Activated naive CD4-positive, alpha-beta T cell treated with anti-CD3 and anti-CD28 coated beads for 36 hours (primary cell): ENCODE measurements at regions of chr6 and their contacts with region 1.

Region 1: DNA sequence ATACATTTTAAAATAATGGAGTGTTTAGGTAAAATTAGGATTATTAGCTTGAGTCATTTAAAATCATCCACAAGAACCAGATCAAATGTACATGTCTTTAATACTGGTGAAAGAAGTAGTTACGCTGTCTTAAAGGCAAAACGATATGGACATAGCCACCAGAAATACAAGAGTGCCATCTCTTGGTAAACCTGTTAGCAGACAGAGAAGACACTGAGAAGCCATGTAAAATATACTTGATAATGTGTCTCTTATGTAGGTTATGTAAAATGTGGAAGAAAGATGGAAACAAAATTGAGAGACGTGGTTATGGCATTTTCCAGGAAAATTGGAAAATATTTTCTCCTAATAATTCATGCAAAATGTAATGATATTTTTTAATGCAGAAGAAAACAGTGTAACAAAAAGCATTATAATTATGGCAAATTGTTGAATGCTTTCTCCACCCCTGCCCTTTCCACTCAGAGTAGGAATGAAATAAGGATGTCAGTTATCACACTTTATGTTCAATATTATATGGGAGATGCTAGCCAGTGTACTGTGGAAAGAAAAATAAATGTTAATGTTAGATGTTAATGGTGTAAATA is 12.2 kb upstream of the SLC17A2 start:
- DNase-seq: peak; percentile 12
- H3K4me3 Mint-ChIP-seq: no peak overlapping the region
- H3K27ac Mint-ChIP-seq: no peak overlapping the region
- H3K4me1 Mint-ChIP-seq: peaks cover 18% of the 10 kb centered on the region
- H3K27me3 Mint-ChIP-seq: no peaks in the 10 kb centered on the region

Region 2: GRCh38 chr6:25278914-25279747 is 663.5 kb before region 1 on chr6 and contains the start of gene CARMIL1:
- CTCF ChIA-PET with region 1: no interaction called
- intact Hi-C with region 1: loop called (anchors 10 kb)
- DNase-seq: peak; percentile 76
- H3K4me3 Mint-ChIP-seq: peak within 1 kb of the TSS; percentile 83
- H3K27ac Mint-ChIP-seq: peak within 1 kb of the TSS; percentile 60
- H3K4me1 Mint-ChIP-seq: peaks cover 29% of the 10 kb centered on the region
- H3K27me3 Mint-ChIP-seq: no peaks in the 10 kb centered on the region
- total RNA-seq, gene CARMIL1: 3.9 to 4.0 TPM

Region 3: DNA sequence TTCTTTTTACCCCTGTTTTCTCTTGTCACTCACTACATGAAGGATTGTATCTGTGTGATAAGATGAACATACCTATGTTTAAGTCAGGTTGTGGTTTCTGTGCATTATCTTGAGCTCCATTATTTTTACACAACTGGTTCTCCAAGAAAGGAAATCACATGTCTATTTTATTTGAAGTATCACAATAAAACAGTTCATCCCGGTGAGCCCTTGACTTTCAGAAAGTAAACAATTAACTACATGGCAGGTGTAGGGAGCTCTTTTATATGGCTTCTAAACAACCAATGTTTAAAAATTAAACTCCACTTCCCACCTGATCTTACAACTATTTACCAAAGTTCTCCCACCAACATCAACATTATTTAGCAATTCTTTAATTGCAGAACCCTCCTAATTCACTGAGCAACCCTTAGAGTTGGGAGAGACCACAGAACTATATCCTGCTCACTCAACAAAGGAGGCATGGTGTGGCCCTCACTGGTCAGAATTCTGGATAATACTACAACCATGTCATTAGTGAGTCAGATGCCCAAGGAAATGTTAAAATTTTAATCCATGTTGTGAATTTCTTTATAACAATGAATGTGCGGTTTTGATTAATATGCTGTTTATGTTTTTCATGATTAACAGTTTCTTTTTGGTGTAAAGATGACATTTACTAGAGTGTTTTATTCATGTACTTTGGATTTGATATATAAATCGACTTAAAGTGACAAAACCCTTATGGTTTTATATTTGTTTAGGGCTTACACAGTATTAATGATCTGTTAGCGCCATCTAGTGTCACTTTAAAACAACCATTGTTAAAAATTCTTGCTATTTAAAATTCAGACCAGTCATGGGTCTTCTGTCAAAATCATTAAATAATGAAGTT is 340.6 kb before region 1 on chr6:
- CTCF ChIA-PET with region 1: no interaction called
- intact Hi-C with region 1: loop called (anchors 10 kb)
- DNase-seq: no peak
- H3K4me3 Mint-ChIP-seq: no peak overlapping the region
- H3K27ac Mint-ChIP-seq: no peak overlapping the region
- H3K4me1 Mint-ChIP-seq: peaks cover 6% of the 10 kb centered on the region
- H3K27me3 Mint-ChIP-seq: no peaks in the 10 kb centered on the region

Region 4: GRCh38 chr6:25717866-25718740 is 224.6 kb before region 1 on chr6:
- CTCF ChIA-PET with region 1: interaction called, 6 read pairs
- intact Hi-C with region 1: loop called (anchors 1 kb)
- DNase-seq: no peak
- H3K4me3 Mint-ChIP-seq: no peak overlapping the region
- H3K27ac Mint-ChIP-seq: no peak overlapping the region
- H3K4me1 Mint-ChIP-seq: no peaks in the 10 kb centered on the region
- H3K27me3 Mint-ChIP-seq: peaks cover 9% of the 10 kb centered on the region

Region 5: DNA sequence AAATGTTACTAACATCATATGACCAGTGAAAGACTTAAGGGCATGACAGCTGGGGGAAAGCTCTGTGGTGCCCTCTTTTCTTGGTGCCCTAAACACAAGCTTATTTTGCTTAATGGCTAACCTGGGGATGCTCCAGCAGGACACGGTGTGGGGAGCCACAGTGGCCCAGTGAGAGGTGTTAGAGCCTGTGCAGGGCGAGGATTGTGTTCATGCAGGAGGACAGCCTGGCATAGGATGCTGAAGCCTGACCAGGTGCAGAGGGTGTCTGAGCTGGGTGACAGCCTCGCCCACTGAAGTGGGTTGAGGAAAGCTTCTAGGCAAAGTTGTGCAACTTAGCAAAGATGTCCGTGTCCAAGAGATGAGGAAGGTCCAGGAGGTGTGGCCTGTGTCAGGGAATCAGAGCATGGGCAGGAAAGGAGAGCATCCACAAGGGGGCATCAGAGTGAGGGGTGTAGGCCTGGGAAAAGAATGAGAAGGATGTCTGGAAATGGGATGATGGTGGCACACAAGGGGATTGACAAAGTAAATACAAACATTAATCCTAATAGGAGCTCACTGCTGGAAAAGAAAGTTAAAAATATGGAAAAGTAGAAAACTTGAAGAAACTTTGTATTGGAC is 154.2 kb before region 1 on chr6:
- CTCF ChIA-PET with region 1: interaction called, 8 read pairs
- intact Hi-C with region 1: loop called (anchors 1 kb)
- DNase-seq: peak; percentile 73
- H3K4me3 Mint-ChIP-seq: no peak overlapping the region
- H3K27ac Mint-ChIP-seq: no peak overlapping the region
- H3K4me1 Mint-ChIP-seq: no peaks in the 10 kb centered on the region
- H3K27me3 Mint-ChIP-seq: no peaks in the 10 kb centered on the region

Region 6: DNA sequence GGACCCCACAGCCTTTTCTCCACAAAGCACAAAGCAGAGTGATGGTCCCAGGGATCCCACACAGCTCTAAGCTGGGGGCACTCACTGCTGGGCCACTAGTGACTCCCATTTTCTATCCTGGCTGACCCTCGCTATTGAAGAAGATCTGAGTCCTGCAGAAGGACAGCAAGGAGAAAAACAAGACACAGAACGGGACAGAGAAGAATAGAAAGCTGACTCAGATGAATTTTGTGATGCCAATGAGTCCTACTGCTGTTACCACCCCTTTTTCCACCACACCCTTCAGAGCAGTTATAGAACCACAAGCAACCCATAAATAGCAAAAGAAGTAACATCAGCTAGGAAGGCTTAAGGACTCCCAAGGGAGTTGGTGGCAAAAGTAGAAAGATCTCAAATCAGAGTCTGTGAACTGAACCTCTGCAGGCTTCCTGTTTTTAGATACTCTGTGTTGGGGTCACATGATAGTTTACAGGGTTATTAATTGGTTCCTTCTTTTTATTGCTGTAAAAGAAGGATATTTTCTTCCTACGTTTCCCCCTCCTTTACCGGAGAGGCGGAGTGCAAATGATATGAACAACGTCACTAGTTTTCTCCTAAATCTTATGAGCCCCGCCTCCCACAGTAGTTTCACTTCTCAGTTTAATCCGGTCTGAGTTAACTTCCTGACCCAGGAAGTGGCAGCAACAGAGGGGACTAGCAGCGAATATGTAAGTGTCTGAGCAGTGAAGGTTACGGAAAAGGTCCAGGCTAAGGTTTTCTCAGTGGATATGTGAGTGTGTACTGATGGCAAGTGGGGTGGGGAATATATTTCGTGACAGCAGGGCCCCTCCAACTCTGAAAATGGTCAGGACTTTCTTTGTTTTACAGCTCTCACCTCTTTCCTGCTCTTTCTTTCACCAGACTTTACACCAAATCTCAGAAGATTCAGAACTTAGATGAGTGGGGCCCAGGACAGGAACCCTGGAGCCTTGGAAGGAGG is 19.8 kb after region 1 on chr6 and contains the start of gene TRIM38:
- CTCF ChIA-PET with region 1: interaction called, 6 read pairs
- intact Hi-C with region 1: loop called (anchors 1 kb)
- DNase-seq: peak; percentile 91
- H3K4me3 Mint-ChIP-seq: peak within 1 kb of the TSS; percentile 99
- H3K27ac Mint-ChIP-seq: peak within 1 kb of the TSS; percentile 99
- H3K4me1 Mint-ChIP-seq: peaks cover 76% of the 10 kb centered on the region
- H3K27me3 Mint-ChIP-seq: no peaks in the 10 kb centered on the region
- total RNA-seq, gene TRIM38: 19.1 to 19.7 TPM